H1 (cell line): ENCODE measurements at regions of chr19 and their contacts with region 1.

Region 1: GRCh38 chr19:33819880-33820781 is 23.5 kb downstream of the KCTD15 start:
- DNase-seq: peak in 1 of 2 experiments; percentile 89
- H3K4me3 ChIP-seq: peak overlapping the region; percentile 57 to 71 (median 62)
- H3K27ac ChIP-seq: no peak overlapping the region
- H3K4me1 ChIP-seq: peaks cover 0 to 12% (median 7%) of the 10 kb centered on the region in 4 experiments; a peak in 6 of 7 replicates
- H3K27me3 ChIP-seq: peaks cover 0 to 7% (median 4%) of the 10 kb centered on the region in 4 experiments; a peak in 5 of 7 replicates
- CTCF ChIP-seq: no peak
- EP300 ChIP-seq: no peak
- POLR2A ChIP-seq: no peak
- RAD21 ChIP-seq: peak; percentile 0 to 3; a peak in 2 of 4 replicates

Region 2: GRCh38 chr19:33795370-33796163 is 24.6 kb before region 1 on chr19:
- CTCF ChIA-PET with region 1: interaction called, 11 read pairs
- POLR2A ChIA-PET with region 1: interaction called, 40 read pairs
- DNase-seq: peak in 1 of 2 experiments; percentile 90
- H3K4me3 ChIP-seq: peak overlapping the region; percentile 40 to 91 (median 58)
- H3K27ac ChIP-seq: peak overlapping the region; percentile 92
- H3K4me1 ChIP-seq: peaks cover 7 to 18% (median 16%) of the 10 kb centered on the region in 4 experiments
- H3K27me3 ChIP-seq: no peaks in the 10 kb centered on the region; a peak in 2 of 7 replicates
- CTCF ChIP-seq: peak; percentile 57 to 93 (median 61)
- EP300 ChIP-seq: peak in 1 of 2 experiments; percentile 96; a peak in 1 of 3 replicates
- POLR2A ChIP-seq: peak; percentile 61 to 76
- RAD21 ChIP-seq: peak; percentile 34 to 69; a peak in 3 of 4 replicates

Region 3: DNA sequence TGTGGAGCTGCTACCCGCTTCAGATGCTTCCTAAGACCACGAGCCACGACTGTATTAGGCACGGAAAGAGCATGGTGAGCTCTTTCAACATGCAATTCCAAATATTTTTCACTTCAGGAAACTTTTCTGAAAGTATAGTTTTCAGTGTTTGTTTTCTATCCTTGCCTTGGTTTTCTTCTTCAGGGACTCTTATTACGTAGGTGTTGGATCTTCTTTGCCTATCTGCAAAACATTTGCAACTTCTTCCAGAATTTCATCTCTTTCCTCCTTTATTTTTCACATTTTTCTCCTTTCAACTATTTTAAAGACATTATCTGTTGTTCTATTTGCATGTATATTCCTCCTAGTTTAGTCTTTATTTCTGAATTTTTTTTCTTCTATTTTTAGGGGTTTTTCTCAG is 203.2 kb after region 1 on chr19:
- CTCF ChIA-PET with region 1: no interaction called
- POLR2A ChIA-PET with region 1: no interaction called
- DNase-seq: no peak
- H3K4me3 ChIP-seq: no peak overlapping the region
- H3K27ac ChIP-seq: no peak overlapping the region
- H3K4me1 ChIP-seq: no peaks in the 10 kb centered on the region
- H3K27me3 ChIP-seq: no peaks in the 10 kb centered on the region
- CTCF ChIP-seq: no peak
- EP300 ChIP-seq: no peak
- POLR2A ChIP-seq: no peak
- RAD21 ChIP-seq: no peak